ENCODE measurements at regions of chr3 and their contacts with region 1.

Region 1: DNA sequence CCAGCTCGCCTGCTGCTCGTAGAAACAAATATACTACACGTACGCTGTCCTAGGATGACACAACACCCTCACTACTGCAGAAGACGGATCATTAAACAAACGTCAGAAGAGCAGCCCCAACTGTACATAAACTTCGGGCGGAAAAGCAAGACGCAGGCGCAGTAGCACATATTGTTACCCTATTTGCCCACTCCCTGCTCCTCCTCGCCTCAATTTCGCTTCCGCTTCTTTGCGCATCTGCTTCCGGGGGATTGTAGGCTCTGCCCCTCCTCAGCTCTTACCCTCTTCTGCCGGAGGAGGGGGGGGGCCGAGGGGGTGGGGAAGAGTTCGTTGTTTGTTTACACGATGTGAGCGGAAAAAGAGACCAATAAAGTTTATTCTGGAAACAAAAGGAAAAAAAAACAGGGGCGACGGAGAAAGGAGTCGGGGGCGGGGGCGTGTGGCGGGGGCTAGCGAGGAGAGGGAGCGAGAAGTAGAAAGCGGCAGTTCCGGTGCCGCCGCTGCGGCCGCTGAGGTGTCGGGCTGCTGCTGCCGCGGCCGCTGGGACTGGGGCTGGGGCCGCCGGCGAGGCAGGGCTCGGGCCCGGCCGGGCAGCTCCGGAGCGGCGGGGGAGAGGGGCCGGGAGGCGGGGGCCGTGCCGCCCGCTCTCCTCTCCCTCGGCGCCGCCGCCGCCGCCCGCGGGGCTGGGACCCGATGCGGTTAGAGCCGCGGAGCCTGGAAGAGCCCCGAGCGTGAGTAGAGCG is at the start of gene PIK3CA:
- DNase-seq: peak; percentile 98
- ATAC-seq: peak; percentile 76
- H3K4me3 ChIP-seq: peak within 1 kb of the TSS; percentile 84 to 98 (median 90)
- H3K4me3 Mint-ChIP-seq: peak within 1 kb of the TSS; percentile 97
- H3K27ac ChIP-seq: peak within 1 kb of the TSS; percentile 92 to 93
- H3K27ac Mint-ChIP-seq: peak within 1 kb of the TSS; percentile 97
- H3K4me1 ChIP-seq: peaks cover 11 to 22% of the 10 kb centered on the region in 2 donors
- H3K4me1 Mint-ChIP-seq: peaks cover 39% of the 10 kb centered on the region
- H3K27me3 ChIP-seq: no peaks in the 10 kb centered on the region
- H3K27me3 Mint-ChIP-seq: peaks cover 3% of the 10 kb centered on the region
- CTCF ChIP-seq: no peak
- total RNA-seq, gene PIK3CA: 59.5 and 61.8 TPM in 2 replicates

Region 2: GRCh38 chr3:177359593-177360357 is 1788.3 kb before region 1 on chr3:
- CTCF ChIA-PET with region 1: no interaction called
- POLR2A ChIA-PET with region 1: no interaction called
- intact Hi-C with region 1: loop called (anchors 5 kb)
- DNase-seq: peak; percentile 96
- ATAC-seq: peak; percentile 79
- H3K4me3 ChIP-seq: peak overlapping the region; percentile 57 to 87 (median 70)
- H3K4me3 Mint-ChIP-seq: peak overlapping the region; percentile 91
- H3K27ac ChIP-seq: peak overlapping the region; percentile 90
- H3K27ac Mint-ChIP-seq: peak overlapping the region; percentile 98
- H3K4me1 ChIP-seq: peaks cover 41 to 53% of the 10 kb centered on the region in 2 donors
- H3K4me1 Mint-ChIP-seq: peaks cover 62% of the 10 kb centered on the region
- H3K27me3 ChIP-seq: no peaks in the 10 kb centered on the region
- H3K27me3 Mint-ChIP-seq: no peaks in the 10 kb centered on the region
- CTCF ChIP-seq: no peak

Region 3: DNA sequence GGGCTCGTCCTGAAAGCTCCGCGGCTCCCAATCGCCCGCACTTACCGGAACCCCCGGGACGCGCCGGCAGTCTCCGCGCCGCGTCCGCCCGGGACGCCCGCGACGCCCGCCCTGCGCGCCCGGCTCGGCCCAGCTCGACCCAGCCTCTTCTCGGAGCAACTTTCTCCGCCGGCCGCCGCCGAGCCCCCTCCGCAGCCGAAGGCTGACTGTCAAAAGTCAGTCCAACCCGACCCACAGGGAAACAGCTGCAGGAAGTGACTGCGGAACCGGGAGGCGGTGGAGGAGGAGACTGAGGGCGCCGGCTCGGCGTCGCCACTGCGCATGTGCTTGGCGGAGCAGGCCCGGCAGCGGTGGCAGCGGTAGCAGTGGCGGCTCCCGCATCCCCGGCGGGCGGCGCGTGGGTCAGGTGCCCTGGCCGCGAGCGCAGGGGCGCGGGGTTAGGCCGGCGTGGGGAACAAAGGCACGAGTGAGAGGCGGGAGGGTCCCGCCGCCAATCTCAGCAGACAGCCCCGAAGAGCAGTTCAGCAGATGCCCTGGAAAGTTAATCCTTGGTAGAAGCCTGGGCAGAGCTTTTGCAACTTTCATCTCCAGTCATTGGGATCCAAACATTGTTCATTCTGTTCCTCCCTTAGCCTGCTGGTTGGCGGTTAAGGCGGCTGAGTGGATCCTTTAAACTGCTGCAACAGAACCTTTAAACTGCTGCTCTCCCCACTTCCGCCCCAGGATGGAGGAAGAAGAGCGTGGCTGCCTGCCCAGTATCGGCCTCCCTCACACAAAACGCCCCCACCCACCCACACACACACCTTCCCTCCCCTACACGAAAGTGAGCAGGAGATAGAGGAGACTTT is 76.3 kb before region 1 on chr3 and contains the start of gene ZMAT3:
- CTCF ChIA-PET with region 1: interaction called, 5 read pairs
- POLR2A ChIA-PET with region 1: interaction called, 13 read pairs
- intact Hi-C with region 1: loop called (anchors 1 kb)
- DNase-seq: peak; percentile 90
- ATAC-seq: peak; percentile 79
- H3K4me3 ChIP-seq: peak within 1 kb of the TSS; percentile 61 to 85 (median 80)
- H3K4me3 Mint-ChIP-seq: peak within 1 kb of the TSS; percentile 100
- H3K27ac ChIP-seq: peak within 1 kb of the TSS; percentile 89 to 92
- H3K27ac Mint-ChIP-seq: peak within 1 kb of the TSS; percentile 96
- H3K4me1 ChIP-seq: peaks cover 36 to 41% of the 10 kb centered on the region in 2 donors
- H3K4me1 Mint-ChIP-seq: peaks cover 63% of the 10 kb centered on the region
- H3K27me3 ChIP-seq: no peaks in the 10 kb centered on the region
- H3K27me3 Mint-ChIP-seq: no peaks in the 10 kb centered on the region
- CTCF ChIP-seq: no peak
- total RNA-seq, gene ZMAT3: 17.5 and 19.5 TPM in 2 replicates

Region 4: DNA sequence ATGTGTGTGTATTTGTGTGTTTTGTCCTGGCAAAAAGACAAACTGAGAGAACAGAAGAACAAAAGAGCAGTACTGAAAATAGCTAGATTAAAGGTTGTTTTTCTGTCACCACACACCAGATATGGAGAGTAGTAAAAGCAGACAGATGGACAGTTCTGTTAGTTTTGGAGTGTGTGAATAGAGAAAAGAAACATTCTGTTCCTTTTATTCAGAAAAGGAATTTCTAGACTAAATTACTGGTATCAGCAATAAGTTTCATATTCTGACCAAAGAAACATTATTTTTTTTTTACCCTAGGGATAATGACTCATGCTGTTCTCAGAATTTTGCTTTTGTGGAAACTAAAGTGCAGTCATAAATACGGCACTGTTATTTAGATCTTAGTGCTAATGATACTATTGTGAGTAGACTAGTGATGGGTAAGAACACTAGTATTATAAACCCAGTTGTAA is 33.0 kb after region 1 on chr3:
- CTCF ChIA-PET with region 1: interaction called, 5 read pairs
- POLR2A ChIA-PET with region 1: interaction called, 4 read pairs
- intact Hi-C with region 1: loop called (anchors 5 kb)
- DNase-seq: no peak
- ATAC-seq: peak; percentile 58
- H3K4me3 ChIP-seq: no peak overlapping the region
- H3K4me3 Mint-ChIP-seq: no peak overlapping the region
- H3K27ac ChIP-seq: no peak overlapping the region
- H3K27ac Mint-ChIP-seq: peak overlapping the region; percentile 46
- H3K4me1 ChIP-seq: peaks cover 13 to 33% of the 10 kb centered on the region in 2 donors
- H3K4me1 Mint-ChIP-seq: peaks cover 47% of the 10 kb centered on the region
- H3K27me3 ChIP-seq: no peaks in the 10 kb centered on the region
- H3K27me3 Mint-ChIP-seq: no peaks in the 10 kb centered on the region
- CTCF ChIP-seq: no peak

Region 5: DNA sequence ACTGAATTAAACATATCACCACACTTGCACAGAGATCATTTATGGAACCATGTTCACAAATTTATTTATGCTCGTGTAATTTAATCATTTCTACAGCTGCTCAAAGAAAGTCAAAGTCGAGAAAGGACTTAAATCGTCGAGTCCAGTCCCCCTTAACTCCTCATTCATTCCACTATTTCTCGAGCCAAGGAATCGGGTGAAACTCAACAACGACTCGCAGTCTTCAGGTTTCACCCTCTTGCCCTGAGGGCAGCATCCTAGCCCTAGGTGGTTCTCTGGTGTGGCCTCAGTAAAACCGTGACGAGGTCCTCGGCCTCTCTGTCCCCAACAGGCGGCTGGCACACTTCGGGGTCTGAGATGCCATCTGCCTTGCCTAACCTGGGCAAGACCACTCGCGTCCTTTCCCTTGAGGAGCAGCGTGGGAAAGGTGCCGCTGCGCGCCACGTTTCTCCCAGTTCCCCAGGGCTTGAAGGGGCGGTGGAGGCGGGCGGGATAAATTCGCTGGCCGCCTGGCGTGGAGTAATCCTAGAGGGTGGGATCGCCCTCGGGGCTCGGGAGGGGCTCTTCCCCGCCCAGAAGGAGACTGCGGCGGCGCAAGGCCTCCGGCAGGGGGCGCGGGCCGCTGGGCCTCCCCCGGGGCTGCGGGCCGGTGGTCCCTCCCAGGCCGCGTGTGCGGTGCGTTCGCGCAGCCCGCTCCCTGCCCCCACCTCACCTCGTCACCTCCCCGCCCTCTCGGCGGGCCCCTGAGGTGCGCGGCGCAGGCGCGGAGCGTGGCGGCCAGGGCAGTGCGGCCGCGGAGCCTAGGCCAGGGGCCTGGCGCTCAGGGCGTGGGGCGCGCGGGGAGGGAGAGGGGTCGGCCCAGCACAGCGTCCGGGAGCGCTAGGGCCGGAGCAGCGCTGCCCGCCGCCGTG is 174.5 kb after region 1 on chr3 and contains the start of gene ZNF639:
- CTCF ChIA-PET with region 1: interaction called, 86 read pairs
- POLR2A ChIA-PET with region 1: interaction called, 9 read pairs
- intact Hi-C with region 1: loop called (anchors 1 kb)
- DNase-seq: peak; percentile 93
- ATAC-seq: peak; percentile 84
- H3K4me3 ChIP-seq: peak within 1 kb of the TSS; percentile 85 to 97 (median 92)
- H3K4me3 Mint-ChIP-seq: peak within 1 kb of the TSS; percentile 96
- H3K27ac ChIP-seq: peak within 1 kb of the TSS; percentile 89 to 99
- H3K27ac Mint-ChIP-seq: peak within 1 kb of the TSS; percentile 95
- H3K4me1 ChIP-seq: peaks cover 25% of the 10 kb centered on the region in 2 donors
- H3K4me1 Mint-ChIP-seq: peaks cover 30% of the 10 kb centered on the region
- H3K27me3 ChIP-seq: no peaks in the 10 kb centered on the region
- H3K27me3 Mint-ChIP-seq: no peaks in the 10 kb centered on the region
- CTCF ChIP-seq: peak; percentile 87
- total RNA-seq, gene ZNF639: 39.8 and 43.1 TPM in 2 replicates

Region 6: DNA sequence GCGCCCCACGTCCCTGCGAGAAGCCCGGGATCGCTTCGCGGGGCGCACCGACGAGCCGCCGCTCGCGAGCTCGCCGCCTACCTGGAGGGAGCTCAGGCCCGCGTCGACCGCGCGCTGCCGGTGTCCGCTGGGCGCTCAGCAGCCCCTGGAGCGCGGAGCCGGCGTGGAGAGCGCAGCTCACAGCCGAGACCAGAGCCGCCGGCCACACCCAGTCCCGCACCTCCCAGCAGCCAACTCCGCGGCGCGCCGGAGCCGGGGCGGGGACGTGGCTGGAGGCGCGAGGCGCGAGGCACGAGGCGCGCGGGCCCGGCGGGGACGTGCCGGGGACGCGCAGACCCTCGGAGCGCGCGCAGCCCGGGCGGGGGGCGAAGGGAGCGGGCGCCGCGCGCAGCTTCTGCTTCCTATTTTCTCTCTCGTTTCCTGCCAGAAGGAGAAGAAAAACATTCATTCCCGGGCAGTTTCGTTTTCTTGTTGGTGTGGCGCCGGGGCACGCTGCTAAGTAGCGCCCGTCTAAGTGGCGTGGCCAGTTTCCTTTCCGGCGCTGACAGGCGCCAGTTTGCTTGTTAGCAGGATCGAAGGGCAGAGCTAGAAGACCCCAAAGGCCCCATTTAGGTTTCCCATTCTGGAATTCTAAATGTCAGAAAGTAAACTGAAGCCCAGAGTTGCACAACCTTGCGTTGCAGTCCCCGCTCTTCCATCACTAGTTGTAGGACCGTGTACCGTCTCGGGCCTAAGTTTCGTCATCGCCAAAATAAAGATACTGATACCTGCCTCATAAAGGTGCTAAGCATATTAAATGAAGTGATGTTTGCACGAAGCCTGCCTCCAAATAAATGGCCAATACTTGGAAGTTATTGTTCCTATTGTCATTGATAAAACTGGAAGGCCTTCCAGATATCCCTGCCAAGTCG is 303.5 kb after region 1 on chr3 and contains the start of gene GNB4:
- CTCF ChIA-PET with region 1: no interaction called
- POLR2A ChIA-PET with region 1: no interaction called
- intact Hi-C with region 1: loop called (anchors 5 kb)
- DNase-seq: peak; percentile 91
- ATAC-seq: peak; percentile 86
- H3K4me3 ChIP-seq: peak within 1 kb of the TSS; percentile 70 to 92 (median 78)
- H3K4me3 Mint-ChIP-seq: peak within 1 kb of the TSS; percentile 97
- H3K27ac ChIP-seq: peak within 1 kb of the TSS; percentile 57 to 75
- H3K27ac Mint-ChIP-seq: peak within 1 kb of the TSS; percentile 94
- H3K4me1 ChIP-seq: peaks cover 16 to 19% of the 10 kb centered on the region in 2 donors
- H3K4me1 Mint-ChIP-seq: peaks cover 44% of the 10 kb centered on the region
- H3K27me3 ChIP-seq: no peaks in the 10 kb centered on the region
- H3K27me3 Mint-ChIP-seq: no peaks in the 10 kb centered on the region
- CTCF ChIP-seq: no peak
- total RNA-seq, gene GNB4: 24.0 and 24.6 TPM in 2 replicates

Region 7: GRCh38 chr3:179653096-179653797 is 505.2 kb after region 1 on chr3:
- CTCF ChIA-PET with region 1: no interaction called
- POLR2A ChIA-PET with region 1: no interaction called
- intact Hi-C with region 1: loop called (anchors 2 kb)
- DNase-seq: peak; percentile 78
- ATAC-seq: peak; percentile 41
- H3K4me3 ChIP-seq: peak overlapping the region; percentile 41 to 88 (median 80)
- H3K4me3 Mint-ChIP-seq: peak overlapping the region; percentile 96
- H3K27ac ChIP-seq: peak overlapping the region; percentile 21 to 36
- H3K27ac Mint-ChIP-seq: peak overlapping the region; percentile 91
- H3K4me1 ChIP-seq: peaks cover 10 to 19% of the 10 kb centered on the region in 2 donors
- H3K4me1 Mint-ChIP-seq: peaks cover 29% of the 10 kb centered on the region
- H3K27me3 ChIP-seq: no peaks in the 10 kb centered on the region
- H3K27me3 Mint-ChIP-seq: no peaks in the 10 kb centered on the region
- CTCF ChIP-seq: no peak